Calu3 (cell line): ENCODE measurements at regions of chr7 and their contacts with region 1.

Region 1: GRCh38 chr7:156473476-156474240 is 166.9 kb upstream of the RNF32 start:
- DNase-seq: peak; percentile 54
- H3K4me3 Mint-ChIP-seq: no peak overlapping the region
- H3K27ac Mint-ChIP-seq: no peak overlapping the region
- H3K4me1 Mint-ChIP-seq: no peaks in the 10 kb centered on the region
- H3K27me3 Mint-ChIP-seq: peaks cover 22% of the 10 kb centered on the region
- CTCF ChIP-seq: peak; percentile 71

Region 2: GRCh38 chr7:156156734-156157610 is 316.7 kb before region 1 on chr7:
- CTCF ChIA-PET with region 1: no interaction called
- intact Hi-C with region 1: loop called (anchors 5 kb)
- DNase-seq: peak; percentile 64
- H3K4me3 Mint-ChIP-seq: no peak overlapping the region
- H3K27ac Mint-ChIP-seq: no peak overlapping the region
- H3K4me1 Mint-ChIP-seq: peaks cover 25% of the 10 kb centered on the region
- H3K27me3 Mint-ChIP-seq: no peaks in the 10 kb centered on the region
- CTCF ChIP-seq: peak; percentile 42

Region 3: DNA sequence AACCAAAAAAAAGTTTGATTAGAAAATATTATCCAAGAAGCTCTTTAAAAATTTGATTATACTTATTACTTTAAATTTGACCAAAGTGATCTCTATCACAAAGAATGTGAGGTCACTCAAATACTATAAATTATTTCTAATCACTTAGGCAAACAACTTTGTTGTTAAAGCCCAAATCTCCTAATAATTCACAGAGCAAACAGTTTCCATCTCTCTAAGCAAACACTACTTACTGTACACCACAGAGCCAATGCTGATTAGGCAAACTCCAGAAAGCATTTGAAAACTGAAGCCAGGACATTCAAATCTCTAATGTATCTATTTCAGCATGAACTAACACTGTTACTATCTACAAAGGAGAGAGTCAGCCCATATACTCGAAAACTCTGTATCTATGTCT is 274.0 kb after region 1 on chr7:
- CTCF ChIA-PET with region 1: no interaction called
- intact Hi-C with region 1: no loop called
- DNase-seq: no peak
- H3K4me3 Mint-ChIP-seq: no peak overlapping the region
- H3K27ac Mint-ChIP-seq: no peak overlapping the region
- H3K4me1 Mint-ChIP-seq: no peaks in the 10 kb centered on the region
- H3K27me3 Mint-ChIP-seq: no peaks in the 10 kb centered on the region
- CTCF ChIP-seq: no peak